Heart right ventricle (tissue), 16 donors: ENCODE measurements at regions of chr22 and their contacts with region 1.

Region 1: DNA sequence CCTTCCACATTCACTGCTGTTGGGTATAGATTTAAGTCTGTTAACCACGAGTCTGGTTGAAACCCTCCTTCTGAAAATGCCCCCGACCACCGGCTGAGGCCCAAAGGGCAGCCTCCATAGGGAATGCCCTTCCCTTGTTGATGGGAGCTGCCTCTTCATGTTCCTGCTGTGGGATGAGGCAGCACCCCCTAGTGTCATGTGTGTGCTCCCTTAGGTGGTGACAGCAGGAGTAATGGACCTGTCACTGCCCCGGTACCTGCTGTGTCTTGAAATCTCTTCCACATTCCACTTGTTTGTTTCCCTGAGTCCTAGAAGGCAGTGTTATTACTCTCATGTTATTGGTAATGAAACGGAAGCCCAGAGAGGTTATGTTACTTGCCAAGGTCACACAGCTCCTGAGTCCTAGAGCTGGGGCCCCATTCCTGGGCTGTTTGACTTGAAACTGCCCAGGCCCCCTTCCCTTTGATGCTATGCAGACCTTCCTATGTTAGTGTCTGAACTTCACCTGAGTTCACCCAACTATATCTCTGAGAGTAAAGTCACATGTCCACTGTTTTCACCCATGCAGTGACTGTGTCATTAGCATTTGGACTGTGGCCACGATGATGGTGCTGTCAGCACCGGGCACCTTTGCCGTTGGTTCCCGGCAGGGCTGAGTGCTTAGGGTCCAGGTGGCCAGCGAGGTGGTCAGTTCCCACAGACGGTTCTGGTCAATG is 234.3 kb downstream of the TBC1D22A start:
- DNase-seq: no peak
- ATAC-seq: peak in 5 of 8 donors; percentile 28 to 70 (median 48)
- H3K4me3 ChIP-seq: no peak overlapping the region
- H3K27ac ChIP-seq: no peak overlapping the region
- H3K4me1 ChIP-seq: peaks cover 0 to 22% (median 7%) of the 10 kb centered on the region in 9 donors
- H3K27me3 ChIP-seq: no peaks in the 10 kb centered on the region
- CTCF ChIP-seq: peak in 3 of 9 donors; percentile 6 to 28 (median 12)

Region 2: DNA sequence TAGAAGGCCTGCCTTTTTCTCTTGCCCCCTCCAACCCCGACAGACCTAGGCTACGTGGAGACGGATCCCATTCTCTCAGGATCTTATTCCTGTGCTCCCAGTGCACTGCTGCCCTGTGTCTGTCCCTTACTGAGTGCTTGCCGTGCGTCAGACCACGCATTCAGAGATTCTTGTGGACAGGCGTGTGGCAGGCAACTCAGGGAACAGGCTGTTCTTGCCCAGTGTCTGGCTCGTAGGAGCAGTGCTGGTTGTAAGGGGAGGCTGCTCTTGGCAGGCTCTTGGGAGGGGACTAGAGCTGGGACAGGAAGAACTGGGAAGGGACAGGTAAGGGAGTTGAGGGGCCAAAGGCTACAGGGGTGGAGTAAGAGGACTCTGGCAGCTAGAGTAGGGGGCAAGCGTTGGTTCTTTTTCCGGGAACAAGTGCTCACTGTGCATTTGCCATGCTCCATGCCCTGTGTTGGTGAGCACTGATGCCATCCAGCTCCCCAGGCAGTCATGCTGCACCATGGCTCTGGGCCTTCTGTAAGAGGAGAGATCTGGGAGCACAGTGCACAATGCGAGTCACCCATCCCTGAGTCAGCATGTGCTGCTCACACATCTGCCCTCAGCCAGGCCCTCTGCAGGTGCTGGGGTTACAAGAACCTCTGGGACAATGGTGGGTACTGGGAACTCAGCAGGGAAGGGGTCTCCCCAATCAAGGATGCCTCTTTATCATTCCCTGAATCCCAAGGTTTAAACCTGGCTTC is 115.2 kb before region 1 on chr22:
- intact Hi-C with region 1: loop called in 1 of 10 experiments (anchors 10 kb)
- DNase-seq: peak in 1 of 2 donors; percentile 55
- ATAC-seq: peak in 7 of 8 donors; percentile 63 to 96 (median 91)
- H3K4me3 ChIP-seq: no peak overlapping the region
- H3K27ac ChIP-seq: peak overlapping the region in 5 of 10 donors; percentile 17 to 39 (median 22)
- H3K4me1 ChIP-seq: peaks cover 0 to 25% (median 9%) of the 10 kb centered on the region in 9 donors
- H3K27me3 ChIP-seq: no peaks in the 10 kb centered on the region
- CTCF ChIP-seq: no peak

Region 3: GRCh38 chr22:47030881-47031627 is 34.3 kb after region 1 on chr22:
- intact Hi-C with region 1: no loop called
- DNase-seq: no peak
- ATAC-seq: no peak
- H3K4me3 ChIP-seq: no peak overlapping the region
- H3K27ac ChIP-seq: no peak overlapping the region
- H3K4me1 ChIP-seq: no peaks in the 10 kb centered on the region
- H3K27me3 ChIP-seq: no peaks in the 10 kb centered on the region
- CTCF ChIP-seq: no peak